ENCODE measurements at regions of chr7 and their contacts with region 1.

Region 1: GRCh38 chr7:25805027-25805687 is 346.8 kb upstream of the NFE2L3 start:
- DNase-seq: no peak
- ATAC-seq: peak; percentile 59
- H3K4me3 ChIP-seq: no peak overlapping the region
- H3K27ac ChIP-seq: peak overlapping the region in 1 of 2 donors; percentile 79
- H3K4me1 ChIP-seq: peaks cover 6 to 7% of the 10 kb centered on the region in 2 donors
- H3K27me3 ChIP-seq: no peaks in the 10 kb centered on the region

Region 2: GRCh38 chr7:25742316-25742715 is 62.8 kb before region 1 on chr7:
- intact Hi-C with region 1: no loop called
- DNase-seq: no peak
- ATAC-seq: no peak
- H3K4me3 ChIP-seq: no peak overlapping the region
- H3K27ac ChIP-seq: no peak overlapping the region
- H3K4me1 ChIP-seq: no peaks in the 10 kb centered on the region
- H3K27me3 ChIP-seq: no peaks in the 10 kb centered on the region

Region 3: GRCh38 chr7:25839084-25839769 is 34.1 kb after region 1 on chr7:
- intact Hi-C with region 1: loop called in 1 of 2 experiments (anchors 5 kb)
- DNase-seq: no peak
- ATAC-seq: no peak
- H3K4me3 ChIP-seq: no peak overlapping the region
- H3K27ac ChIP-seq: peak overlapping the region; percentile 9 to 81
- H3K4me1 ChIP-seq: peaks cover 6 to 8% of the 10 kb centered on the region in 2 donors
- H3K27me3 ChIP-seq: no peaks in the 10 kb centered on the region

Measured in aorta (tissue), 5 donors.